Activated CD4-positive, alpha-beta T cell treated with anti-CD3 and anti-CD28 coated beads, Interleukin-2, amount 10 ng/mL, durations not matched to agents 24 days and 14 days (primary cell): ENCODE measurements at regions of chr11 and their contacts with region 1.

Region 1: DNA sequence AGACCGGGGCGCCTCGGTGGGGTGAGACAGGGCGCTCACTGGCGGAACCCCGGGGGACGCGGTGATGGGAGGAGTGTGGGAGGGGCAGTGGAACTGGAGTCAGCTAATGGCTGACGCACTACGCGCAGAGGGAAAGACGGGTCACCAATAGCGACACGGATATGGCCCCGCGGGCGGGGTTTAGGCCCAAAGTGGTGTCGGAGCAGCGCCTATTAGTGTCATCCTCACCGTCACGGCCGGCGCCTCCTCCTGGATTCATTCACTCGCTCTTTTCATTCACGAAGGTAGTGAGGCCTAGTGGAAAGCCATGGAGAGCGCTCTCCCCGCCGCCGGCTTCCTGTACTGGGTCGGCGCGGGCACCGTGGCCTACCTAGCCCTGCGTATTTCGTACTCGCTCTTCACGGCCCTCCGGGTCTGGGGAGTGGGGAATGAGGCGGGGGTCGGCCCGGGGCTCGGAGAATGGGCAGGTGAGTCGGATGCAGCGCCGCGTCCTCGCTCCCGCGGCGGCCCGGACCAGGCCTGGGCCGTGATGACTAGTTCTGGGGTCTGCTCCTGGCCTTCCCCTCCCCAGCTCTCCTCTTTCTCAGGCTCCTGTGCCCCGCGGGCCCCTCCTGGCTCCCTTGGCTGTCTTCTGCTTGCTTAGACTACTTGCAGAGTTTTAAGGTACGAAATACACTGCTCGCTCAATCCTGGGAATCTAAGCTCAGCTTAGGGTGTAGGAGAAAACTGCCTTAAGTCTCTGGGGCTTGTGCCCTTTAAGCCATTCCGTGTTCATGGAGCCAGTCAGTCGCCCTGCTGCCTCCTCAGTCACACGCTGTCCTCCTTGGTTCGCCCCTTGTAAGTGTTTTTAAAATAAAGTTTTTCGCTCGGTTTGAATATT is at the start of gene HSD17B12:
- DNase-seq: peak; percentile 100
- H3K4me3 Mint-ChIP-seq: peak within 1 kb of the TSS; percentile 98
- H3K27ac Mint-ChIP-seq: peak within 1 kb of the TSS; percentile 96
- H3K4me1 Mint-ChIP-seq: peaks cover 29% of the 10 kb centered on the region
- H3K27me3 Mint-ChIP-seq: peaks cover 12% of the 10 kb centered on the region
- total RNA-seq, gene HSD17B12: 70.8 and 80.1 TPM in 2 replicates

Region 2: GRCh38 chr11:43643898-43644620 is 36.7 kb before region 1 on chr11:
- intact Hi-C with region 1: loop called (anchors 1 kb)
- DNase-seq: peak; percentile 96
- H3K4me3 Mint-ChIP-seq: peak overlapping the region; percentile 94
- H3K27ac Mint-ChIP-seq: peak overlapping the region; percentile 87
- H3K4me1 Mint-ChIP-seq: peaks cover 11% of the 10 kb centered on the region
- H3K27me3 Mint-ChIP-seq: peaks cover 15% of the 10 kb centered on the region

Region 3: GRCh38 chr11:43708776-43709175 is 28.0 kb after region 1 on chr11:
- intact Hi-C with region 1: no loop called
- DNase-seq: no peak
- H3K4me3 Mint-ChIP-seq: no peak overlapping the region
- H3K27ac Mint-ChIP-seq: no peak overlapping the region
- H3K4me1 Mint-ChIP-seq: peaks cover 2% of the 10 kb centered on the region
- H3K27me3 Mint-ChIP-seq: no peaks in the 10 kb centered on the region

Region 4: DNA sequence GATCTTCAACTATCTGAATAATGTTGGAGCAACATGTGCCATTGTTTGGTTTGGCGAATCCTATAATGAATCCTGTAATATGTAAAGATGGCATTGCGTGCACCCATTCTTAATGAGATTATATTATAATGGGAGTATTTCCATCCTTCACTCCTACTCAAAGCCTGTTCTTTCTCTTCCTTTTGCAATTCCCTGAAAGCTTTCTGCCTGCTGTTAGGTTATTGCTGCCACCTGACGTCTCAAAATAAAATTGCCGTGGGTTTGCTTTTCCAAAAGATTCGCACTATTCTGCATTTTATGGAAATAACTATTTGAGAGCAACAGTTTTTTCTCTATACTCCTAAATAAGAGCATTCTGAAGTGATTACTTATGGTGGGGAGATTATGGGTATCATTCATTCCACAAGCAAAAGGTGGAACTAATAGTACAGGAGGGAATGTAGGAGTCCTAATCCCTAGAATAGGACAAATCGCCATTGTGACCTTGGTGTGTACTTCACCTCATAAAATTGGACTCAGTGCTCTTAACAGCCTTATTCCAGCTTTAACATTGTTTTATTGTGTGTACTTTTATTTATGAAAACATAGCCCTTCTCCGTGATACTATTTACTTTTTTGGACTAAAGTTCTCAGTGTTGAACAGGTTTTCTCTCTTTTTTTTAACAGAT is 130.3 kb after region 1 on chr11:
- intact Hi-C with region 1: no loop called
- DNase-seq: no peak
- H3K4me3 Mint-ChIP-seq: no peak overlapping the region
- H3K27ac Mint-ChIP-seq: no peak overlapping the region
- H3K4me1 Mint-ChIP-seq: no peaks in the 10 kb centered on the region
- H3K27me3 Mint-ChIP-seq: no peaks in the 10 kb centered on the region

Region 5: DNA sequence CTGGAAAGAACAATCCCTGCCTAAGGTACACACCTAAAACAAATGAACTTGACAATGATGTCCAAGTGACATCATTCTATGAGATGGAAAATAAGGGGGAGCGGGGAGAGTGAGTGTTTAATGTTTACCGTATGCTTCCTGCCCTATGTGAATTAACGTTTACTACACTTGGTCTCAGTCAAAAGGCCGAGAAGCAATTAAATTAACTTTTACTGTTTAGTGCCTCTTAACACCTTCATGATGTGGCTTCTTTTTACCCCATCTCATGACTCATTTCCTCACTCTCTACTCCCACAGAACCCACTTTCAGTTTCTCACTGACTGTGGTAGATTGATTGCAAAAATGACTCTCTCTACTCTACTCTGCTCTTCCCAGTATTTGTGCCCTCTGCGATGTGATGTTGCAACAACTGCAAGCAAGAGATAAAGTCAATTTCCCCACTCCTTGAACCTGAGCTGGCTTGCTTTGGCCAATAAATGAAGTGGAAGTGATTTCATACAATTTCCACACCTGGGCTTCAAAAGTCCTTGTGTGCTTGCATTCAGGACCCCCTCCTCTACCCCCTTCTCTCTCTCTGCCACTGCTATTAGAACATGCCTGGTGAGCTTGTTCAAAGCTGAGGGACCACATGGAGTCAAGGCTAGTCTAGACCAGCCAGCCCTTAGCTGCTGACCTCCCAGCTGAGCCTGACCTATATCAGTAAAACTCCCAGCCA is 188.2 kb after region 1 on chr11:
- intact Hi-C with region 1: loop called (anchors 1 kb)
- DNase-seq: peak; percentile 89
- H3K4me3 Mint-ChIP-seq: peak overlapping the region; percentile 66
- H3K27ac Mint-ChIP-seq: peak overlapping the region; percentile 76
- H3K4me1 Mint-ChIP-seq: peaks cover 28% of the 10 kb centered on the region
- H3K27me3 Mint-ChIP-seq: peaks cover 60% of the 10 kb centered on the region

Region 6: DNA sequence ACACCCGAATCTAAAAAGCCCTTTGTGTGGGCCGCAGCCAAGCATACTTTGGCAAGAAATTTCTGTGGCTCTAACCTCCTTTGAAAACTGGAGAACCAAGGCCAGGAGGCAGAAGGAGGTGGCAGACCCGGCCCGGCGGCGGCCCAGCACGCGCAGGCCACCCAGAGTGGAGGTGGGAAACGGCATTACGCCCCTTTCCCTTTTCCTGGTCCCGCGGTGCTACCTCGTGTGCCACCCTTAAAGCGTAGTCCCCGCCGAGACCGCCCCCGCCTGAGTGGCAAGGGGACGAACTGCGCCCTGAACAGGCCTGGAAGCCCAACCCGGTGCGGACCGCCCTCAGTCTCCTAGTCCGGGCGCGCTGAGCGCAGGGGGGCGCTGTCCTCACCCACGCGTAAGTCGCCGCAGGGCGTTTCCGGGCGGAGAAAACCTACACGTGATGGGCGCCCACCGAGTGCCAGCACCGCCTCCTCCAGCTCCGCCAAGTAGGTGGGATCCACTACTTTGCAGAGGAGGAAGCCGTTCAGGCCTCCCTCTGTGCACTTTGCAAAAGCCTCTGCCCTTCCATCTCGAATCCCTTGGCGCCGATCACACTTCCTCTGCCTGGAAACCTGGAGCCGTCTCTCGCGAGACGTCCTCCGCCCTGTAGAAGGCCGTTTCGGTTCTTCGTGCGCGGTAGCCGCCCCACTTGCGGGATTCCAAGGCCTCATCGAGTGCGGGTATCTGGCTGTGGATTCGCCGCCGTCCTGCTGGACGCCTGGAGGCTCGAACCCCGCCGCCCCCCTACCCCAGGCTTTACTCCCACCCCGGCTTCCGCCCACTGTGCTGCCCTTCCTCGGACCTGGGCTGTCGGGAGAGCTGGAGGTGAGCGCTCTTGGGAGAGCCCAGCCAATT is 385.3 kb after region 1 on chr11 and contains the start of gene ACCS:
- intact Hi-C with region 1: loop called (anchors 5 kb)
- DNase-seq: peak; percentile 97
- H3K4me3 Mint-ChIP-seq: peak within 1 kb of the TSS; percentile 92
- H3K27ac Mint-ChIP-seq: peak within 1 kb of the TSS; percentile 95
- H3K4me1 Mint-ChIP-seq: peaks cover 25% of the 10 kb centered on the region
- H3K27me3 Mint-ChIP-seq: peaks cover 2% of the 10 kb centered on the region
- total RNA-seq, gene ACCS: 19.7 and 21.7 TPM in 2 replicates